Sciatic nerve (tissue), 2 donors: ENCODE measurements at regions of chr20 and their contacts with region 1.

Region 1: DNA sequence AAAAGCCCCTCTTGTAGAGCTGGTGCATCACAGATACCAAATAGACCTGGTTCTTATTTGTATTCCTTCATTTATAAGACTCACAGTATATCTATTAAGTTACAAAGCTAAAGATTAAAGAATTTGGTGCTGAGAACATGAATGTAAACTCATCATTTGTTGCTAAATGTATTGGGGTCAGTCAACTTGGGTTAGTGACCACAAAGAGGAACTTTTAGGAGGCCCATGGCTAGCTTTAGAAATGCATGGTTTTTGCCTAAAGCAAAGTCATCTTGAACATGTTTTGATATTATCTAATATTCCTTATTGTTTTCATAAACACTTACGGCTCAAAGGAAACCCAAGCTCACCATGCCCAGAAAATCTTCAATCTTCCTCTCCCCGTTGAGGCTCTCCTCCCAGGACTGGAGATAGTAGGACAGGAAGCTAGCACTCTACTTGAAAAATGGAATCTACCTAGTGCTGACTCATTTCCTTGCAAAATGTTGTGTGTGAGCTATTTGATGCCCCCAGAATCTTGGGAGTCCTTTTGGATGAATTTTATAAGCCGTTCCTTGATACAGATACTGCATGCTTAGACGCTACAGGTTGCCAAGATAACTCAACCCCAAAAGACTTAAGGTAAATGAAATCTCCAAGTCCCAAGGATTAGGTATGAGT is 121.4 kb downstream of the BMP2 start:
- DNase-seq: no peak
- ATAC-seq: no peak

Region 2: GRCh38 chr20:6908673-6909072 is 19.8 kb after region 1 on chr20:
- intact Hi-C with region 1: no loop called
- DNase-seq: no peak
- ATAC-seq: no peak

Region 3: GRCh38 chr20:7085449-7085848 is 196.6 kb after region 1 on chr20:
- intact Hi-C with region 1: loop called (anchors 2 kb)
- DNase-seq: no peak
- ATAC-seq: no peak